AG04450 (cell line): ENCODE measurements at regions of chr20 and their contacts with region 1.

Region 1: DNA sequence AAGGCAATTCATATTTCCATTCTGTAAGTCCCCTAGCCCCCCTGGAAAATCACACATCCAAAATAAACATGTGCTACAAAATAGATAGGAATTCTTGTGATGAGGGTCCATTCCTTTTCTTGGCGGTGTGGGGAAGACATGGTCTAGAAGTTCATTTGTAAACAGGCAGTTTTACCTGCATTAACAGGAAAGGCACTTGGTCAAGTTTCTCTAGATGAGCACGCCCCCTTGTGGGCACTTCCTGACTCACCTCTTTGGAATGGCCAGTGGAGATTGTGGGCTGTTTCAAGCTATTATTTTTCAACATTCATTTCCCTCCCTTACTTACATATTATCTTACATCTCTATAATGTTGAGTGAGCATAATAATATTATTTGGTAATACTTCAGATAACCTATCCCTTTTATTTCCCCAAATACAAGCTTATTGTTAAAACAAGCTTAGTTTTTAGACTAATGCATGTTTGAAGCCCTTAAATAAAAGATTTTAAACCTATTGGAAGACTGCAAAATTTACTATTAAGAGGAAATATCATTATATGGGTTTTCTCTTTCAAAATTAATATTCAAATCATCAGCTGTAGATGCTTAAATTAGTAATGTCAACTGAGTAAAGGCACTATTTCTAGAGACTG is 92.1 kb downstream of the TASP1 start:
- DNase-seq: peak; percentile 30
- H3K4me3 ChIP-seq: no peak overlapping the region
- H3K27ac ChIP-seq: no peak overlapping the region
- H3K27me3 ChIP-seq: no peaks in the 10 kb centered on the region
- CTCF ChIP-seq: peak; percentile 75

Region 2: GRCh38 chr20:13119583-13119982 is 427.0 kb before region 1 on chr20:
- CTCF ChIA-PET with region 1: interaction called, 44 read pairs
- POLR2A ChIA-PET with region 1: no interaction called
- DNase-seq: peak; percentile 7
- H3K4me3 ChIP-seq: no peak overlapping the region
- H3K27ac ChIP-seq: no peak overlapping the region
- H3K27me3 ChIP-seq: peaks cover 3% of the 10 kb centered on the region
- CTCF ChIP-seq: peak; percentile 93

Region 3: DNA sequence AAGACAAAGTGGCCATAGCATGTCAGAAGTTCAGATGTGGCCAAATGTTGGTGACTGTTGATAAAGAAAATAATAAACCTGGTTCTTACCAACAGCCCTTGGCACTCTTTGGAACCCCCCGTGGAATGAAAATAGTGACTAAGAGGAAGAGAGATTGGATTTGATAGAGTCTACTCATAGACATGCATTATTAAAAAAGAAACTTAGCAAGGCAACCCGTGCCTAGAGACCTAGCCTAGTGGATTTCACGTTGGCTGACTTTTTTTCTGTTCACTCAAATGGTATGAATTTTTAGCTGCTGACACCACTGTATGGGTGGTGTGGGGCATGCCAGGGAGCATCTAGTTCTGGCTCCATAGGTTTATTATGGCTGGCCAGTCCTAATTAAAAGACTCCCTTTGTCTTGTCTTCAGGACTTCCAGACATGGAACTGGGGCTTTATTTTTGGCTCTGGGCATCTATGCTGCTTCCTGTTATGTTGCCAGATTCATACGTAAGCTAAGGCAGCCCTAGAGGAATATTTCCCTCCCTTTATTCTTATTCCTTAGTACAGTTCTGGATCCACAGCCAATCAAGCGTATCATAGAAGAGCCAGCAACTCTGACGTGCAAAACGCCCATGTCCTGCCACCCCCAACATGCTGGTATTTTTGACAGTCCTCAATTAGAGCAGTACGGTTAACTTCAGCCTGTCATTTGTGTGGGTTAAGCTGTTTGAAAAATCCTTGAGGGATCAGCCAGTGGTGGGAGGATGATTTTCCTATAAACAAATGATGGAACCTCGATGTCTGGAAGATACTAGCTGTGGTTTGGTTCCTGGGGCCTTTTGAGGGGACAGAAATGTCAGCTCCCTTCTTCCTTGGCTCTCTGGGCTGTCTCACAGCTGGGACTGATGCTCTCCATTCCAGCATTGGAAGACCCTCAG is 198.0 kb before region 1 on chr20:
- CTCF ChIA-PET with region 1: interaction called, 14 read pairs
- POLR2A ChIA-PET with region 1: no interaction called
- DNase-seq: no peak
- H3K4me3 ChIP-seq: peak overlapping the region; percentile 45
- H3K27ac ChIP-seq: peak overlapping the region; percentile 33
- H3K27me3 ChIP-seq: peaks cover 2% of the 10 kb centered on the region
- CTCF ChIP-seq: no peak

Region 4: GRCh38 chr20:13449868-13450434 is 96.7 kb before region 1 on chr20:
- CTCF ChIA-PET with region 1: interaction called, 10 read pairs
- POLR2A ChIA-PET with region 1: no interaction called
- DNase-seq: no peak
- H3K4me3 ChIP-seq: no peak overlapping the region
- H3K27ac ChIP-seq: no peak overlapping the region
- H3K27me3 ChIP-seq: no peaks in the 10 kb centered on the region
- CTCF ChIP-seq: no peak

Region 5: GRCh38 chr20:13515796-13516558 is 30.6 kb before region 1 on chr20:
- CTCF ChIA-PET with region 1: interaction called, 47 read pairs
- POLR2A ChIA-PET with region 1: no interaction called
- DNase-seq: no peak
- H3K4me3 ChIP-seq: no peak overlapping the region
- H3K27ac ChIP-seq: no peak overlapping the region
- H3K27me3 ChIP-seq: no peaks in the 10 kb centered on the region
- CTCF ChIP-seq: no peak

Region 6: DNA sequence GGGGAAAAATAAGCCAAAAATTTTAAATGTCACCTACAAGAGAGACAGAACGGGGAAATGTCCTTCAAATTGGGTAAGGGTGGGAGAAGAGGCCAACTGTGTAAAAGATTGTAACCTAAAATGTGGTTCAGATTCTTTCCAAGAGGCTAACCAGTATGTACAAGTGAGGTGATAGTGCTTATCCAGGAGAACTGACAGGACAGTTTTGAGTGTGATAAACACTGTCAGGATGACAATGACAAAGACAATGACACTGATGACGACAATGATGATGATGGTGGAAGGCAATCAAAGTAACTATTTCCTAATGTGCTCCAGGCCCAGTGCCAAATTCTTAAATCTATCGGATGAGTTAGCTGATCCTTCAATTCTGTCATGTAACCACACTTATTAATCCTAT is 34.8 kb after region 1 on chr20:
- CTCF ChIA-PET with region 1: interaction called, 13 read pairs
- POLR2A ChIA-PET with region 1: no interaction called
- DNase-seq: no peak
- H3K4me3 ChIP-seq: no peak overlapping the region
- H3K27ac ChIP-seq: no peak overlapping the region
- H3K27me3 ChIP-seq: no peaks in the 10 kb centered on the region
- CTCF ChIP-seq: no peak

Region 7: DNA sequence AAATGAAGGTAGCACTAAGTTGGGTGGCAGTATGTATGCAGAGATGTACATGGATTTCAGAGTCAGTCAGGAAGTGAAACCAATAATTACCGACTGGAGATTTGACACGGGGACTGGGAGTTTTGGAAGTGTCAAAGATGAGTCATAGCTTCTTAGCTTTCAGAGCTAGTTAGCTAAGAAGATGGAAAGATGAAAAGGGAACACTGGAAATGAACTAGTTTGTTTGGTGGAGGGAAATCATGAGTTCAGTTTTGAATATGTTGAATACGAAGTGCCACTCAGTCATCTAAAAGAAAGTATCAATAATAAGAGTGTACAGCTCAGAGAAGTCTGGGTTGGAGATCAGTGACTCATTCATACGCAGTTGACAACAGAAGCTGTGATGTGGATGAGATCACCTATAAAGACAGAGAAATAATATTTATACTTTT is 230.6 kb after region 1 on chr20:
- CTCF ChIA-PET with region 1: interaction called, 45 read pairs
- POLR2A ChIA-PET with region 1: no interaction called
- DNase-seq: no peak
- H3K4me3 ChIP-seq: no peak overlapping the region
- H3K27ac ChIP-seq: no peak overlapping the region
- H3K27me3 ChIP-seq: no peaks in the 10 kb centered on the region
- CTCF ChIP-seq: no peak

Region 8: DNA sequence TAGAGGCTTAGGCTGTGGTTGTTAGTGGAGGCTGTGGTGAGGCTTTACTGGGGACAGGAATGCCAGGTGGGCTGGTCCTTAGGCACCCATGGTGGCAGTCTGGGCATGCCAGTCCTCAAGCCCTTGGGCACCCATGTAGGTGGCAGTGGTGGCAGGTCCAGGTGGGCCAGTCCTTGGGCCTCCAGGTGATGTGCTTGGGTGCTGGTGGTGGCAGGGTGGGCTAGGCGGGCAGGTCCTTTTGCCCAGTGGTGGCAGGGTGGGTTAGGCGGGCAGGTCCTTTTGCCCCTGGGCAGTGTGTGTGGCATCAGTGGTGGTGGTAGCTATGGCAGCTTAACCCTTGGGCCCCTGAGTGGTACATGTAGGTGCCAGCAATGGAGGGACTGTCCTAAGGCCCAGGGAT is 657.1 kb after region 1 on chr20:
- CTCF ChIA-PET with region 1: no interaction called
- POLR2A ChIA-PET with region 1: no interaction called
- DNase-seq: no peak
- H3K4me3 ChIP-seq: no peak overlapping the region
- H3K27ac ChIP-seq: no peak overlapping the region
- H3K27me3 ChIP-seq: no peaks in the 10 kb centered on the region
- CTCF ChIP-seq: no peak